ENCODE measurements at regions of chr5 and their contacts with region 1.

Region 1: DNA sequence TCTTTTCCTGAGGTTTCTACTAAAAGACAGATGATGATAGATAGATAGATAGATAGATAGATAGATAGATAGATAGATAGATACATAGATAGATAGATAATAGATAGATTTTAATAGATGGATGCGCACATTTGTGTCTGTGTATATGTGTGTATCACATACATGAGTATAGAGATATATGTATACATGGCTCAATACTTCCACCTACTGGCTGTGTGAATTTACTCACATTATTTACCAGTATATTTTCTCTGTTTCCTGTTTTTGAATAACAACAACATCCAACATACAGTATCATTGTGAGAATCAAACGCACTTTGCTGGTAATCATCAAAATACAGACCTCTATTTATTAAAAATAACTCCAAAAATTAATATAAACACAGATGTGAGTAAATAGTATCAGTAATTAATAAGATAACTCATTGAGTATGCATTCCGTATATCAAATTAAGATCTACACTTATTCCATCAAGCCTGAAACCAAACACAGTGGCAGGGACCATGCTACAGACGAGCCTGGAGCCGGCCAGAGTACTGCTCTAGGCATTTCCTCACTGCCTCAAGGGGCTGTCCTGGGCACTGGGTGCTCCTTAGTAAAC is 338.0 kb downstream of the SEMA5A start:
- DNase-seq: peak; percentile 26
- CTCF ChIP-seq: peak; percentile 49

Region 2: DNA sequence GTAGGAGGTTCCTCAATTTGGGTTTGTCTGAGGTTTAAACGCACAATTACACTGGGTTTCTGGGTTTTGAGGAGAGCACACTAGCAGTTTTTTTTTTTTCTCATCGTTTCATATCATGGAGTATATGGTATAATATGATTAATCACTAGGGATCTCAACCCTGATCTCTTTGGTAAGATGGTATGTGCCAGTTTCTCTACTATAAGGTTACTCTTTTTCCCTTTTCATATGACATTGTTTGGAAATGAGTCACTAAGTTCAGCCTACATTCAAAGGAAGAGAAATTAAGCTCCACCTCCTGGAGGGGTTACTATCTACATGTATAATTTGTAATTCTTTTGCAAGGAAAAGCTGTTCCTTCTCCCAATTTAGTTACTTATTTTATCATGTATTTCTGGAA is 1303.7 kb before region 1 on chr5:
- in situ Hi-C with region 1: loop called (anchors 25 kb)
- DNase-seq: no peak
- CTCF ChIP-seq: no peak

Region 3: GRCh38 chr5:9564752-9565151 is 356.8 kb after region 1 on chr5:
- in situ Hi-C with region 1: no loop called
- DNase-seq: no peak
- CTCF ChIP-seq: no peak